ENCODE measurements at regions of chr7 and their contacts with region 1.

Region 1: GRCh38 chr7:50206453-50207250 is 97.9 kb upstream of the IKZF1 start:
- DNase-seq: no peak
- ATAC-seq: no peak
- H3K4me3 ChIP-seq: no peak overlapping the region
- H3K4me3 Mint-ChIP-seq: no peak overlapping the region
- H3K27ac ChIP-seq: no peak overlapping the region
- H3K27ac Mint-ChIP-seq: no peak overlapping the region
- H3K4me1 ChIP-seq: peaks cover 8 to 14% of the 10 kb centered on the region in 2 donors
- H3K4me1 Mint-ChIP-seq: peaks cover 45% of the 10 kb centered on the region
- H3K27me3 ChIP-seq: no peaks in the 10 kb centered on the region
- H3K27me3 Mint-ChIP-seq: no peaks in the 10 kb centered on the region
- CTCF ChIP-seq: no peak

Region 2: GRCh38 chr7:49577576-49577975 is 629.1 kb before region 1 on chr7:
- CTCF ChIA-PET with region 1: no interaction called
- POLR2A ChIA-PET with region 1: no interaction called
- intact Hi-C with region 1: no loop called
- DNase-seq: no peak
- ATAC-seq: no peak
- H3K4me3 ChIP-seq: no peak overlapping the region
- H3K4me3 Mint-ChIP-seq: no peak overlapping the region
- H3K27ac ChIP-seq: no peak overlapping the region
- H3K27ac Mint-ChIP-seq: no peak overlapping the region
- H3K4me1 ChIP-seq: no peaks in the 10 kb centered on the region
- H3K4me1 Mint-ChIP-seq: no peaks in the 10 kb centered on the region
- H3K27me3 ChIP-seq: no peaks in the 10 kb centered on the region
- H3K27me3 Mint-ChIP-seq: no peaks in the 10 kb centered on the region
- CTCF ChIP-seq: no peak

Region 3: GRCh38 chr7:50185951-50186682 is 20.5 kb before region 1 on chr7:
- CTCF ChIA-PET with region 1: interaction called, 13 read pairs
- POLR2A ChIA-PET with region 1: no interaction called
- intact Hi-C with region 1: no loop called
- DNase-seq: no peak
- ATAC-seq: no peak
- H3K4me3 ChIP-seq: no peak overlapping the region
- H3K4me3 Mint-ChIP-seq: no peak overlapping the region
- H3K27ac ChIP-seq: no peak overlapping the region
- H3K27ac Mint-ChIP-seq: no peak overlapping the region
- H3K4me1 ChIP-seq: peaks cover 0 to 6% of the 10 kb centered on the region in 2 donors
- H3K4me1 Mint-ChIP-seq: peaks cover 17% of the 10 kb centered on the region
- H3K27me3 ChIP-seq: no peaks in the 10 kb centered on the region
- H3K27me3 Mint-ChIP-seq: no peaks in the 10 kb centered on the region
- CTCF ChIP-seq: no peak

Region 4: GRCh38 chr7:50359995-50360925 is 153.6 kb after region 1 on chr7:
- CTCF ChIA-PET with region 1: interaction called, 241 read pairs
- POLR2A ChIA-PET with region 1: no interaction called
- intact Hi-C with region 1: no loop called
- DNase-seq: no peak
- ATAC-seq: no peak
- H3K4me3 ChIP-seq: no peak overlapping the region
- H3K4me3 Mint-ChIP-seq: no peak overlapping the region
- H3K27ac ChIP-seq: peak overlapping the region in 1 of 2 donors; percentile 69
- H3K27ac Mint-ChIP-seq: peak overlapping the region; percentile 81
- H3K4me1 ChIP-seq: peaks cover 36 to 57% of the 10 kb centered on the region in 2 donors
- H3K4me1 Mint-ChIP-seq: peaks cover 92% of the 10 kb centered on the region
- H3K27me3 ChIP-seq: no peaks in the 10 kb centered on the region
- H3K27me3 Mint-ChIP-seq: no peaks in the 10 kb centered on the region
- CTCF ChIP-seq: no peak

Region 5: GRCh38 chr7:50409856-50410745 is 203.4 kb after region 1 on chr7:
- CTCF ChIA-PET with region 1: interaction called, 211 read pairs
- POLR2A ChIA-PET with region 1: interaction called, 8 read pairs
- intact Hi-C with region 1: no loop called
- DNase-seq: peak; percentile 87
- ATAC-seq: peak; percentile 63
- H3K4me3 ChIP-seq: no peak overlapping the region
- H3K4me3 Mint-ChIP-seq: peak overlapping the region; percentile 83
- H3K27ac ChIP-seq: peak overlapping the region; percentile 90 to 94
- H3K27ac Mint-ChIP-seq: peak overlapping the region; percentile 99
- H3K4me1 ChIP-seq: peaks cover 97% of the 10 kb centered on the region in 2 donors
- H3K4me1 Mint-ChIP-seq: peaks cover 95% of the 10 kb centered on the region
- H3K27me3 ChIP-seq: no peaks in the 10 kb centered on the region
- H3K27me3 Mint-ChIP-seq: no peaks in the 10 kb centered on the region
- CTCF ChIP-seq: no peak

Region 6: DNA sequence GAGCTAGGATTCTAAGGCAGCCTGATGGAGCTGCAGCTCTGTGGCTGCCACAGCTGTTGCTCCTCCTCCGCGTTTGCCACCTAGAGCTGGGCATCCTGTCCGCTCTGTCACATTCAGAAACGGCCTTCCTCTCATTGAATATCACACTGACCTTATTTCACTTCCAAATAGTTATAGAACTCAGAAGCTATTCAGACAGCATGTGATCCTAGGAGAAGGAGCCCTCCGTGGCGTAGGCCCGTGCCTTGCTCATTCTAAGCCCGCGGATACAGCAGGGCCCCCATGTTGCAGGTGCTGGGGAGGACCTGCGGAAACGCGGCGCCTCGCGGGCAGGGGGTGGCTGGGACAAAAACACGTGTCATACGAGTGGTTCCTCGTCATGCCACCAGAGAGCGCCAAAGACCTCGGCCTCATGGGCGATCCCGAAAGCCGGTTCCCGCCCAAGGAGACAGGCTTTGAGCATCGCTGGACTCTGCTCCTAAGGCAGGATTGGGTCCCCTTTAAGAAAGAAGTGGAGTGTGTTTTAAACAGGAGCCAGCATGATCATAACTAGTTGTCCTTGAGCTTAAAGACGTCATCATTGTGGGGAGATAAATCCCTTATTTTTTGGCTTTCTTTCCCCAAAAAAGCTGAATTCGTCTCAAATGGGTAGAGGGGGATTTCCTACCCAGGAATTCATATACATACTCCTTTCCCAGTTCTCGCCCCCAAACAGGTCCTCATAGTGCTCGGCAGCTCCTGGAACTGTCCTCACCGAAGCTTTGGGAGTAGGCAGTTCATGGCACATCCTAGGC is 261.4 kb after region 1 on chr7:
- CTCF ChIA-PET with region 1: interaction called, 16 read pairs
- POLR2A ChIA-PET with region 1: no interaction called
- intact Hi-C with region 1: no loop called
- DNase-seq: peak; percentile 79
- ATAC-seq: peak; percentile 94
- H3K4me3 ChIP-seq: peak overlapping the region in 3 of 5 experiments; percentile 7 to 56 (median 34)
- H3K4me3 Mint-ChIP-seq: peak overlapping the region; percentile 54
- H3K27ac ChIP-seq: no peak overlapping the region
- H3K27ac Mint-ChIP-seq: no peak overlapping the region
- H3K4me1 ChIP-seq: peaks cover 9 to 10% of the 10 kb centered on the region in 2 donors
- H3K4me1 Mint-ChIP-seq: peaks cover 9% of the 10 kb centered on the region
- H3K27me3 ChIP-seq: no peaks in the 10 kb centered on the region
- H3K27me3 Mint-ChIP-seq: peaks cover 5% of the 10 kb centered on the region
- CTCF ChIP-seq: peak; percentile 81

Measured in B cell (primary cell).